Activated naive CD4-positive, alpha-beta T cell treated with anti-CD3 and anti-CD28 coated beads for 36 hours (primary cell): ENCODE measurements at regions of chr20 and their contacts with region 1.

Region 1: GRCh38 chr20:46013826-46014516 is 5.3 kb downstream of the MMP9 start:
- DNase-seq: peak; percentile 71
- H3K4me3 Mint-ChIP-seq: no peak overlapping the region
- H3K27ac Mint-ChIP-seq: no peak overlapping the region
- H3K4me1 Mint-ChIP-seq: peaks cover 36% of the 10 kb centered on the region
- H3K27me3 Mint-ChIP-seq: peaks cover 42% of the 10 kb centered on the region

Region 2: DNA sequence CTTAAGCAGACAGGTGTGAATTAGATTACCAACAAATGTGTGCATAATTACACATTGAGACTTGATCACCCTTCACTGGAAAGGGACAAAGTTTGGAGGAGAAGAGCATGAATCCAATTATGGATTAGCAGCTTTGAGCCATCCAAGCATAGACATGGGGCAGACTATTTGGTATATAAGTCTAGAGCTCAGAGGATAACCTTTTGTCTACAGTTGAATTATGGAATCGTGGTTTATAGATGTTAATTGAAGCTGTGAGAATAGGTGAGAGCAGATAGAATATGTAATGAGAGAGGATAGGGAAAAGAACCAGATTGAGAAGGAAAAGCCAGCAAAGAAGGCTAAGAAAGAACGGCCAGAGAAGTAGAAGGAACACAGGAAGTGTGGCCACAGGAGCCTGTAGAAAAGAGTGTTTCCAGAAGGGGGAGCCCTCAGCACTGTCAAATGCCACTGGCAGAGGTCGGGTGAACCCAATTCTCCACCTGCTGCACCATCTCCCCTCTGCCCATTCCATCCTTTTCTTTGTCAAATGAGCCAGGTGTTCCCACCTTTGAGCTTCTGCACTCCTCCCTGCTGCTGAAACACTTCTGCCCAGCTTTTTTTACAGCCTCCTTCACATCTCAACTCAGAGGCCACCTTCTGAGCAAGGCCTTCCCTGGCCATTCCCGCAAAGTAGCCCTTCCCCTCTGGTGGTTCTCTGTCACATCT is 214.9 kb before region 1 on chr20:
- CTCF ChIA-PET with region 1: interaction called, 4 read pairs
- intact Hi-C with region 1: loop called (anchors 2 kb)
- DNase-seq: peak; percentile 82
- H3K4me3 Mint-ChIP-seq: no peak overlapping the region
- H3K27ac Mint-ChIP-seq: no peak overlapping the region
- H3K4me1 Mint-ChIP-seq: peaks cover 10% of the 10 kb centered on the region
- H3K27me3 Mint-ChIP-seq: no peaks in the 10 kb centered on the region

Region 3: GRCh38 chr20:45998761-45999160 is 15.2 kb before region 1 on chr20:
- CTCF ChIA-PET with region 1: interaction called, 58 read pairs
- intact Hi-C with region 1: no loop called
- DNase-seq: peak; percentile 73
- H3K4me3 Mint-ChIP-seq: no peak overlapping the region
- H3K27ac Mint-ChIP-seq: no peak overlapping the region
- H3K4me1 Mint-ChIP-seq: peaks cover 67% of the 10 kb centered on the region
- H3K27me3 Mint-ChIP-seq: no peaks in the 10 kb centered on the region

Region 4: GRCh38 chr20:46117704-46118467 is 103.9 kb after region 1 on chr20 and contains the start of gene CD40:
- CTCF ChIA-PET with region 1: interaction called, 13 read pairs
- intact Hi-C with region 1: no loop called
- DNase-seq: peak; percentile 74
- H3K4me3 Mint-ChIP-seq: peak within 1 kb of the TSS; percentile 96
- H3K27ac Mint-ChIP-seq: peak within 1 kb of the TSS; percentile 82
- H3K4me1 Mint-ChIP-seq: peaks cover 19% of the 10 kb centered on the region
- H3K27me3 Mint-ChIP-seq: peaks cover 1% of the 10 kb centered on the region
- total RNA-seq, gene CD40: 6.1 to 6.3 TPM

Region 5: DNA sequence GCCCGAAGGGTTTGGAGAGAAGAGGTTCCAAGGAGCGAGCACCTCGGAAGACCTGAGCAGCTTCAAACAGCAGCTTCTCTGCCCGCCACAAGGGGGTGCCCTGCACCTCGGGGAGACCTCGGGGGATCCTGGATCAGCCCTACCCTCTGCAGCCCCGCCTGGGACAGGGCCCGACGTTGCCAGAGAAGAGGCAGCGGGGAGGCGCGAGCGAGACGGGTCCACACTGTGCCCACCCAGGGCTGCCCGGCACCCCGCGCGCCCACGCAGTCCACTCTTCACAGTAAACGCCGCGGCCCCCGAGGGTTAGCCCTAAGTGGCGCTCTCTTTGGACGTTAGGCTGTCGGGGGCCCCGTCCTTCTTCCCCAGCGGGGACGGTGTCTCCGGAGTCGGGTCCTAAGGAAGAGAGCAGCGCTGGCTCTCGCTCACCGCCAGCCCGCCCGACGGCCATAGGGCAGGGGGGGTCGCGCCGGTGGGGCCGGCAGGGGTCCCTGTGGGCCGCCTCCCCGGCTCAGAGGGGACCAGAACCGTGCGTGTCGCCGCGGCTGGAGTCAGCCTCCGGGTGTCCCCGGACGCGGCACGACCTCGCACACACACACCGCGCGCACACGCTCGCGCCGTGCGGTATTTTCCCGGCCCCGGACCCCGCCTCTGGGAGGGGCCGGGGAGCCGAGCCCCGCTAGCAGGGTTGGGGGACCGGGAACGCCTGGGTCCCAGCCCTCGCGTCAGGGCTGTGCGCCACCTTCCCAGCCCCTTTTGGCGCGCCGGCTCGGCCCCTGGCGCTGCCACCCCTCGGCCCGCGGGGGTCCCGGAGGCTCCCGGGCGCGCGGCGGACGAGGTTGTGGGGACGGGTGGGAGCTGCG is 293.4 kb after region 1 on chr20:
- CTCF ChIA-PET with region 1: no interaction called
- intact Hi-C with region 1: loop called (anchors 5 kb)
- DNase-seq: peak; percentile 81
- H3K4me3 Mint-ChIP-seq: peak overlapping the region; percentile 25
- H3K27ac Mint-ChIP-seq: no peak overlapping the region
- H3K4me1 Mint-ChIP-seq: peaks cover 7% of the 10 kb centered on the region
- H3K27me3 Mint-ChIP-seq: peaks cover 57% of the 10 kb centered on the region